ENCODE measurements at regions of chr11 and their contacts with region 1.

Region 1: GRCh38 chr11:75547580-75548058 is 14.4 kb upstream of the SERPINH1 start:
- DNase-seq: peak; percentile 48
- H3K4me3 ChIP-seq: no peak overlapping the region
- H3K27ac ChIP-seq: no peak overlapping the region
- H3K4me1 ChIP-seq: no peaks in the 10 kb centered on the region
- H3K27me3 ChIP-seq: no peaks in the 10 kb centered on the region
- CTCF ChIP-seq: peak; percentile 51 to 85 (median 75)
- POLR2A ChIP-seq: no peak

Region 2: DNA sequence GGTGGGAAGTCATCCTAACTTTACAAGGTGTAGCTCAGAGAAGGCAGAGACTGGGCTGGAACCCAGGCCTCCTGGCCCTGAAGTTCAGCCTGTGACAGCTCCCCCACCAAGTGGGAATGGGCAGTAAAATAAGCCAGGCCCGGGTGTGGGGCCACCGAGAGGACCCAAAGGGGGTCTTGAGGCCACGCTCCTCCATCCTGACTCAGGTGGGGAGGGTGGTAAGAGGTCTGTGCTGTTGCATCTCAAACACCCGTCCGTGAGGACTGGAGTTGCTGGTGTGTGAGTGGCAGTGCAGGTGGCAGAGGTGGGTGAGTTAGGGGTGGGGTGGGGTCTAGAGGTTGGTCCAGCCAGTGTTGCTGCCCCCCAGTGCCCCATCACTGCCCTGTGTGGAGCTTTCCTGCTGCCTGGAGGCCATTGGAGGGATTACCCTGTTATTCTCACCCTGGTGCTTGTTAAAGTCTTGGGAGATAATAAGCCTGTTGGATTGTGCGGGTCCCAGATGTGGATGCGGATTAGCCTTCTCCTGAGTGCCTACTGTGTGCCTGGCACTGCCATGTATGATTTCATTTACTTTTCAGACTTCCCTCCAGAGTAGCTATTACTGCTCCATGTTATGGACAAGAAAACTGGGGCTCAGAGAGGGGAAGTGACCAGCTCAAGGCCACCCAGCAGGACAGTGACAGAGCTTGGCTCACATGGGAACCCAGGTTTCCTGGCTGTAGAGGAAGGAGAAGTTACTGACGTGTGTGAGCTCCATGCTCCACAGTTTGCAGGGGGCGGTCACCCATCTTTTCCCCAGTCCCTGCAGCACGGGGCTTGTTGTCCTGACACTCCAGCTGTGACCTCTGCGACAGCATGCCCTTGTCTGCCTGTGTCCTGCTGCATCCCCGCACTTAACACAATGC is 27.3 kb after region 1 on chr11:
- intact Hi-C with region 1: loop called (anchors 2 kb)
- DNase-seq: no peak
- H3K4me3 ChIP-seq: no peak overlapping the region
- H3K27ac ChIP-seq: no peak overlapping the region
- H3K4me1 ChIP-seq: no peaks in the 10 kb centered on the region
- H3K27me3 ChIP-seq: no peaks in the 10 kb centered on the region
- CTCF ChIP-seq: no peak
- POLR2A ChIP-seq: no peak

Region 3: DNA sequence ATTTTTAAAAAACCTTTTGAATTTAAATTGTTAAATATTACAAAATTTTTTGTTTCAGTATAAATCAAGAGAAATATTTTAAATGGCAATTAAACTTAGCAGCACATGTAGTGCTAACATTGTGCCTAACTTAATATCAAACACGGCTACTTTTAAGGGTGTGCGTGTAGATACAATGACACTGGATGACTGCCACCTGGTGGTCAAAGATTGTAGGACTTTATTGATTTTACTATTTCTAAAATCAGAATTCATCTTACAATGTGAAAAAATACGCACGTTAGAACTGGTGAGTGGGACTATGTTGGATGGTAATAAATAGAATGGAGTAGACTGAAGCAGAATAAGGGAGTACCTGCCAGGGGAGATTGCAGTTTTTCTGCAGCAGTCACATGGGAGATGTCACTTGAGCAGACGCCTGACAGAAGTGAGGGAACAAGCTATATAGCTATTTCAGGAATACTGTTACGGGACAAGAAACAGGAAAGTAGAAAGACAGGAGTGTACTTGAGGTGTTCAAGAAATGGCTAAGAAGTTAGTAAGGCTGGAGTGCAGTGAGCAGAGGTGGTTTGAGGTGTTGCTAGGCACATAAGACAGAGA is 320.3 kb after region 1 on chr11:
- intact Hi-C with region 1: loop called (anchors 5 kb)
- DNase-seq: peak; percentile 53
- H3K4me3 ChIP-seq: no peak overlapping the region
- H3K27ac ChIP-seq: no peak overlapping the region
- H3K4me1 ChIP-seq: peaks cover 8% of the 10 kb centered on the region
- H3K27me3 ChIP-seq: no peaks in the 10 kb centered on the region
- CTCF ChIP-seq: peak; percentile 69 to 95 (median 86)
- POLR2A ChIP-seq: no peak

Measured in prostate gland (tissue), 2 donors.